HepG2 (cell line): ENCODE measurements at regions of chr18 and their contacts with region 1.

Region 1: GRCh38 chr18:79169958-79170555 is 100.9 kb downstream of the ATP9B start:
- DNase-seq: peak; percentile 10
- ATAC-seq: peak; percentile 96
- H3K4me3 ChIP-seq: no peak overlapping the region
- H3K27ac ChIP-seq: no peak overlapping the region
- H3K4me1 ChIP-seq: 0 out of 2 replicates have a peak, but pooled peaks cover 7% of the 10 kb centered on the region
- H3K27me3 ChIP-seq: no peaks in the 10 kb centered on the region
- CTCF ChIP-seq: no peak
- EP300 ChIP-seq: no peak
- POLR2A ChIP-seq: no peak
- RAD21 ChIP-seq: no peak

Region 2: DNA sequence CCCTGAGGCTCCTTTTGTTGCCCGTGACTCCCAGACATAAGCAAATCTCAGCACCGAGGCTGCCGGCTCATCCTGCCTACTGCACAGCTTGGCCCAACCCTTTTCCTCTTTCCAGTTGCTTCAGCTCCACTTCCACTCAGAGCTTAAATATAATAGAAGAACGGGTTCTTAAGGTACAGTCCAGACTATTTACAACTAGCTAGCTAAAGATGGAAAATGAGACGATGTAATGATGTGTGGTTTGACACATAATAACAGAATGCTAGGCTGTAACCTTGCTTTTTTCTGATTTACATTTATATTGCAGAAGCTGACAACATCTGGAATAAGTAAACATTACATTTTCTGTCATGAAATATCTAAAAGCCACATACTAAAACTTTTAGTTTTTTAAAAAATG is 127.8 kb before region 1 on chr18:
- CTCF ChIA-PET with region 1: no interaction called
- POLR2A ChIA-PET with region 1: no interaction called
- in situ Hi-C with region 1: no loop called
- intact Hi-C with region 1: no loop called
- DNase-seq: no peak
- ATAC-seq: no peak
- H3K4me3 ChIP-seq: no peak overlapping the region
- H3K27ac ChIP-seq: no peak overlapping the region
- H3K4me1 ChIP-seq: peaks cover 8% of the 10 kb centered on the region
- H3K27me3 ChIP-seq: peaks cover 4 to 22% of the 10 kb centered on the region in 2 experiments; a peak in 3 of 5 replicates
- CTCF ChIP-seq: no peak
- EP300 ChIP-seq: no peak
- POLR2A ChIP-seq: no peak
- RAD21 ChIP-seq: no peak

Region 3: GRCh38 chr18:79069792-79070151 is 100.3 kb before region 1 on chr18:
- CTCF ChIA-PET with region 1: no interaction called
- POLR2A ChIA-PET with region 1: no interaction called
- in situ Hi-C with region 1: no loop called
- intact Hi-C with region 1: loop called (anchors 10 kb)
- DNase-seq: no peak
- ATAC-seq: no peak
- H3K4me3 ChIP-seq: peak overlapping the region; percentile 79 to 88 (median 82)
- H3K27ac ChIP-seq: peak overlapping the region; percentile 76
- H3K4me1 ChIP-seq: peaks cover 30% of the 10 kb centered on the region
- H3K27me3 ChIP-seq: no peaks in the 10 kb centered on the region; a peak in 1 of 5 replicates
- CTCF ChIP-seq: no peak
- EP300 ChIP-seq: no peak
- POLR2A ChIP-seq: no peak
- RAD21 ChIP-seq: no peak